Activated CD4-positive, alpha-beta T cell treated with anti-CD3 and anti-CD28 coated beads, Interleukin-2, amount 10 ng/mL, durations not matched to agents 24 days and 14 days (primary cell): ENCODE measurements at regions of chr18 and their contacts with region 1.

Region 1: DNA sequence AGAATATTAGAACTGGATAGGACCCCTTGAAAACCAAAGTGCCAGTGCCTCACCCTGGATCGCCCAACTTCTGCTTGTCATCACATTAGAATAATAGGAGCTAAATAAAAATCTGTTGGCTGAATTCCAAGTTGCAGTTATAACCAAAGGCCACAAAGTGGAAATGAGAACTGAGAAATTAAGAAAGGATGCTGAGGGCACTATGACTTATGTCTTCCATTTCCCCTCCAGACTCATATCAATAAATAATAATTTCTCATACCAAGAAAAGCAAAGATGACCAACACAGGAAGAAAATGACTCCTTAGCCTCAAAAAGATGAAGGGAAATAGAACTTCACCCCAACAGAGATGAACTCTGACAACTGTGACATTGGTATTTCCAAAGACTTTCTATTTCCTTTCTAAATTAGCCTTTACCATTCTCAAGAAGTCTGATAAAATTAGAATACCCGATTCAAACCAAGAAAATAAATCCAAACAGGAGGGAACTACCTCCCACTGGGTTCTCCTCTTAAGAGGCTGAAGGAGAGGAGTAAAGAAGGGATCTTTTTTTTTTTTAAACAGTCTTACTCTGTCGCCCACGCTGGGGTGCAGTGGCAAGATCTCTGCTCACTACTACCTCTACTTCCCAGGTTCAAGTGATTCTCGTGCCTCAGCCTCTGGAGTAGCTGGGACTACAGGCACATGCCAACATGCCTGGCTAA is 46.5 kb upstream of the EPG5 start:
- DNase-seq: no peak
- H3K4me3 Mint-ChIP-seq: peak overlapping the region; percentile 26
- H3K27ac Mint-ChIP-seq: peak overlapping the region; percentile 41
- H3K4me1 Mint-ChIP-seq: peaks cover 13% of the 10 kb centered on the region
- H3K27me3 Mint-ChIP-seq: no peaks in the 10 kb centered on the region

Region 2: GRCh38 chr18:45122506-45122905 is 891.1 kb before region 1 on chr18:
- intact Hi-C with region 1: no loop called
- DNase-seq: no peak
- H3K4me3 Mint-ChIP-seq: no peak overlapping the region
- H3K27ac Mint-ChIP-seq: no peak overlapping the region
- H3K4me1 Mint-ChIP-seq: no peaks in the 10 kb centered on the region
- H3K27me3 Mint-ChIP-seq: no peaks in the 10 kb centered on the region

Region 3: GRCh38 chr18:45997700-45998151 is 15.9 kb before region 1 on chr18:
- intact Hi-C with region 1: loop called (anchors 1 kb)
- DNase-seq: peak; percentile 75
- H3K4me3 Mint-ChIP-seq: peak overlapping the region; percentile 51
- H3K27ac Mint-ChIP-seq: peak overlapping the region; percentile 83
- H3K4me1 Mint-ChIP-seq: peaks cover 30% of the 10 kb centered on the region
- H3K27me3 Mint-ChIP-seq: no peaks in the 10 kb centered on the region

Region 4: DNA sequence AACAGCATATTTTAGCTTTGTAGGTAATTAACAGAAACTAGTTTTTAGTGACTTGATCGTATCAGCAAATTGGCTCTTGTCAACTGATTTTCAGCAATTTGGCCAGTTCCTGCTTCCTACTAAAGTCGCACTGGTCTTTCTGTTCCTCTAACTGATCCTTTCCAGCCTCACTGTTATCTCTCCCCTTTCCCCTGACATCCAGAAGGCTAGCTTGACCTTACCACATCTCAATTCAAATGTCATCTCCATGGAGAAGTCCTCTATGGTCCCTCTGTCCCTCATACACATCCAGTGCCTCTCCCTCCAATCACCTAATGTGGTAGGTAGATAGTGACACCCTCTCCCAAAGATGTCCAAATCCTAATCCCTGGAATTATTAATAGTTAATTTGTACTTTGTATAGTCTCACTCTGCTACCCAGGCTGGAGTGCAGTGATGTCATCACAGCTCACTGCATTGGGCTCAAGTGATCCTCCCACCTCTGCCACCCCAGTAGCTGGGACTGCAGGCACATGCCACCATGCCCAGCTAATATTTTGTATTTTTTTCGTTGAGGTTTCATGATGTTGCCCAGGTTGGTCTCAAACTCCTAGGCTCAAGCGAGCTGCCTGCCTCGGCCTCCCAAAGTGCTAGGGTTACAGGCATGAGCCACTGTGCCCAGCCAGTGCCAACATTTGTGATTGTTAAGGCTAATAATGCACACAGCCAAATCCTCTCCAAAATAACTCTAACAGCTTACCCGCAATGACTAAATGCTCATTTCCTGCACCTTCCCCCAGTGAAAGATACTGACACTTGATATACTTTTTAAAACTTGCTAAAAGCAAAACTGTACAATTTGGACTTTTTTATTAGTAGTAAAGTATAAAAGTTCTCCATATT is 41.6 kb after region 1 on chr18:
- intact Hi-C with region 1: loop called (anchors 5 kb)
- DNase-seq: no peak
- H3K4me3 Mint-ChIP-seq: peak overlapping the region; percentile 62
- H3K27ac Mint-ChIP-seq: peak overlapping the region; percentile 55
- H3K4me1 Mint-ChIP-seq: peaks cover 32% of the 10 kb centered on the region
- H3K27me3 Mint-ChIP-seq: no peaks in the 10 kb centered on the region